Pancreas (tissue), 10 donors: ENCODE measurements at regions of chr15 and their contacts with region 1.

Region 1: GRCh38 chr15:65638681-65639089 is 16.9 kb downstream of the SLC24A1 start:
- DNase-seq: peak in 1 of 6 donors; percentile 17
- ATAC-seq: peak; percentile 83 to 97 (median 88)
- H3K4me3 ChIP-seq: no peak overlapping the region
- H3K27ac ChIP-seq: no peak overlapping the region
- H3K4me1 ChIP-seq: no peaks in the 10 kb centered on the region
- H3K27me3 ChIP-seq: no peaks in the 10 kb centered on the region
- CTCF ChIP-seq: peak; percentile 49 to 67 (median 59)

Region 2: GRCh38 chr15:65561602-65562322 is 76.9 kb before region 1 on chr15:
- intact Hi-C with region 1: no loop called
- DNase-seq: no peak
- ATAC-seq: no peak
- H3K4me3 ChIP-seq: no peak overlapping the region
- H3K27ac ChIP-seq: no peak overlapping the region
- H3K4me1 ChIP-seq: no peaks in the 10 kb centered on the region
- H3K27me3 ChIP-seq: no peaks in the 10 kb centered on the region
- CTCF ChIP-seq: no peak

Region 3: GRCh38 chr15:65856821-65857455 is 218.3 kb after region 1 on chr15:
- intact Hi-C with region 1: loop called in 1 of 3 experiments (anchors 10 kb)
- DNase-seq: peak; percentile 57 to 83 (median 70)
- ATAC-seq: peak; percentile 77 to 91 (median 86)
- H3K4me3 ChIP-seq: no peak overlapping the region
- H3K27ac ChIP-seq: no peak overlapping the region
- H3K4me1 ChIP-seq: no peaks in the 10 kb centered on the region
- H3K27me3 ChIP-seq: no peaks in the 10 kb centered on the region
- CTCF ChIP-seq: peak; percentile 75 to 86 (median 80)

Region 4: GRCh38 chr15:66196602-66197001 is 557.9 kb after region 1 on chr15:
- intact Hi-C with region 1: loop called in 1 of 3 experiments (anchors 10 kb)
- DNase-seq: no peak
- ATAC-seq: no peak
- H3K4me3 ChIP-seq: no peak overlapping the region
- H3K27ac ChIP-seq: no peak overlapping the region
- H3K4me1 ChIP-seq: no peaks in the 10 kb centered on the region
- H3K27me3 ChIP-seq: no peaks in the 10 kb centered on the region
- CTCF ChIP-seq: no peak